ENCODE measurements at regions of chr9 and their contacts with region 1.

Region 1: GRCh38 chr9:74277532-74277931 is 219.6 kb upstream of the RORB start:
- DNase-seq: peak; percentile 54
- H3K4me3 Mint-ChIP-seq: no peak overlapping the region
- H3K27ac Mint-ChIP-seq: no peak overlapping the region
- H3K4me1 Mint-ChIP-seq: peaks cover 3% of the 10 kb centered on the region
- H3K27me3 Mint-ChIP-seq: no peaks in the 10 kb centered on the region

Region 2: DNA sequence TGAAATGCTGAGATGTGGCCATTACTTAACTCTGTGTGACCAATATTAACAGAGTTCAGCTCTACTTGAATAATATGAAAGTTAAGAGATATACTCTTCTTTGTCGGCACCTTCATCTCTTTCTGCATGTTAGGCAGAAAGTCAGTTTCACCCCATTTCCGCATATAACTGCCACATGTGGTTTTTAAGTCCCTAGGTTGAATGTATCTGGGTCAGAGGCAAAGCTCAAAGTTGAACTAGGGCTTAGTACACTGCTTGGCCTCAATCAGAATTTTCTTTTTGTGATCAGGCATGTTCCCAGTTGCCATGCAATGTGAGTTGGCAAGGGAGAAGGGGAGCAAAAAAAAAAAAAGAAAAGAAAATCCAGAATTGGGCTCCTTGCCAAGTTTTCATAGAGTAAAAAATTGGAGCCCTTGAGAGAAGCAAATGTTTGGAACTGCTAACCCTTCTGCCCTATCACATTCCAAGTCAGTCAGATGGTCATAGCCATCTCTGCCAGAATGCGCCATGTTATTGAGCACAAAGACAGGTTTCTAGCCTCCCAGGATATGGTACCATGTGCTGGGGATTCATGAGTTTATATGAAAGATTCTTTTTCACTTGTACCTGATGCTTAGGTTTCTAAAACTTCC is 31.6 kb before region 1 on chr9:
- CTCF ChIA-PET with region 1: no interaction called
- POLR2A ChIA-PET with region 1: no interaction called
- intact Hi-C with region 1: loop called (anchors 1 kb)
- DNase-seq: no peak
- H3K4me3 Mint-ChIP-seq: no peak overlapping the region
- H3K27ac Mint-ChIP-seq: peak overlapping the region; percentile 13
- H3K4me1 Mint-ChIP-seq: peaks cover 2% of the 10 kb centered on the region
- H3K27me3 Mint-ChIP-seq: no peaks in the 10 kb centered on the region

Region 3: DNA sequence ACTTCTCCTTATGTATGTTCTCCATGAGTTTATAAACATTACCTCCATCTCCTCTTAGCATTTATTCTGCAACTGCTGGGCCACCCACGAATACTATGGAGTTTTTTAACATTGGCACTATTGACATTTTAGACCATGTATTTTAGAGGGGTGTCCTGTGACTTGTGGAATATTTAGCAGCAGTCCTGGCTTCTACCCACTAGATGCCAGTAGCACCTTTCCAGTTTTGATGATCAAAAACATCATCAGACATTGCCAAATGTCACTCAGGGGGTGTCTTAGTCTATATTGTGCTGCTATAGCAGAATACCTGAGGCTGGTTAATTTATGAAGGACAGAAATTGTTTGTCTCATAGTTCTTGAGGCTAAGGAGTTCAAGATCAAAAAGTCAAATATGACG is 32.1 kb after region 1 on chr9:
- CTCF ChIA-PET with region 1: no interaction called
- POLR2A ChIA-PET with region 1: no interaction called
- intact Hi-C with region 1: no loop called
- DNase-seq: no peak
- H3K4me3 Mint-ChIP-seq: no peak overlapping the region
- H3K27ac Mint-ChIP-seq: no peak overlapping the region
- H3K4me1 Mint-ChIP-seq: no peaks in the 10 kb centered on the region
- H3K27me3 Mint-ChIP-seq: no peaks in the 10 kb centered on the region

Region 4: GRCh38 chr9:74333384-74334032 is 56.0 kb after region 1 on chr9:
- CTCF ChIA-PET with region 1: no interaction called
- POLR2A ChIA-PET with region 1: no interaction called
- intact Hi-C with region 1: no loop called
- DNase-seq: no peak
- H3K4me3 Mint-ChIP-seq: no peak overlapping the region
- H3K27ac Mint-ChIP-seq: no peak overlapping the region
- H3K4me1 Mint-ChIP-seq: peaks cover 4% of the 10 kb centered on the region
- H3K27me3 Mint-ChIP-seq: no peaks in the 10 kb centered on the region

Region 5: DNA sequence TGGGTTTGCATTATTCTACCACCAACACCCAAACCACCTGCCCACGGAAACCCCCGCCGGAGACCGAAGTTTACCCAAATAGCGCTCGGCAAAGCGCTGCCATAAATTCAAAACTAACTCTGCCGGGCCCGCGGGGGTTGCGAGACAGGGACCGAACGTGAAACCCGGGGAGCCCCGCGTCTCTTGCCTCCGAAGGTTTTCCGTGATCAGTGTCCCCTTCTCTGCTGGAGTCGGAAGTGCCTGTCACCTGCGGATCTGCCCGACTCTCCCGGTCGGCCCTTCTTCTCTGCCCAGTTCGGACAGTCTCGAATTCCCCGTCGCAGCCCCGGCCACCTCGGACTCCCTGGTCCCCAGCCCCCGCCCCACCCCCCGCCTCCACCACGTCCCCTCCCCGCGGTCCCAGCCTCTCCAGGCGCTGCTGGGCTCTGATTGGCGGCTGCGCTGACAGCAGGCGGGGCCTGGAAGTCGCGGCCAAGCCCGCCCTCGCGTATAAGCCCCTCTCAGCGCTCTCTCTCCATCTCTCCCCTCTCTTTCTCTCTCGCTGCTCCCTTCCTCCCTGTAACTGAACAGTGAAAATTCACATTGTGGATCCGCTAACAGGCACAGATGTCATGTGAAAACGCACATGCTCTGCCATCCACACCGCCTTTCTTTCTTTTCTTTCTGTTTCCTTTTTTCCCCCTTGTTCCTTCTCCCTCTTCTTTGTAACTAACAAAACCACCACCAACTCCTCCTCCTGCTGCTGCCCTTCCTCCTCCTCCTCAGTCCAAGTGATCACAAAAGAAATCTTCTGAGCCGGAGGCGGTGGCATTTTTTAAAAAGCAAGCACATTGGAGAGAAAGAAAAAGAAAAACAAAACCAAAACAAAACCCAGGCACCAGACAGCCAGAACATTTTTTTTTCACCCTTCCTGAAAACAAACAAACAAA is 219.6 kb after region 1 on chr9 and contains the start of gene RORB:
- CTCF ChIA-PET with region 1: no interaction called
- POLR2A ChIA-PET with region 1: no interaction called
- intact Hi-C with region 1: loop called (anchors 2 kb)
- DNase-seq: peak; percentile 39
- H3K4me3 Mint-ChIP-seq: peak within 1 kb of the TSS; percentile 76
- H3K27ac Mint-ChIP-seq: no peak within 1 kb of the TSS
- H3K4me1 Mint-ChIP-seq: peaks cover 23% of the 10 kb centered on the region
- H3K27me3 Mint-ChIP-seq: peaks cover 39% of the 10 kb centered on the region
- total RNA-seq, gene RORB: 0.02 to 0.07 TPM